ENCODE measurements at regions of chrX and their contacts with region 1.

Region 1: DNA sequence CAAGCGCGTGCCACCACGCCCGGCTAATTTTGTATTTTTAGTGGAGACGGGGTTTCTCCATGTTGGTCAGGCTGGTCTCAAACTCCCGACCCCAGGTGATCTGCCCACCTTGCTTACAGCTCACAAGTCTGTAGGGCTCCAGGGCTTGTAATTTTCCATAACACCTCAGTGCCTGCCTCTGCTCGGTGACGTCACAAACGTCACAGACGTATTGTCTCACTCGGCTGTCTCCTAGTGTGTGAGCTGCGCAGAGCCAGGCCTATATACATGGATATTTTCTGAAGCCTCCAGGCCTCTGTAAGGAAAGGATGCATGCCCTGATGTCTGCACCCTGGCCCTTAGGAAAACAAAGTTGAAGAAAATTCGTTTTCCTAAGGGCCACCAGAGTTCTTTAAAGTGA is 8.6 kb upstream of the NKRF start:
- DNase-seq: no peak
- H3K4me3 Mint-ChIP-seq: no peak overlapping the region
- H3K27ac Mint-ChIP-seq: no peak overlapping the region
- H3K4me1 Mint-ChIP-seq: peaks cover 7% of the 10 kb centered on the region
- H3K27me3 Mint-ChIP-seq: peaks cover 34% of the 10 kb centered on the region
- CTCF ChIP-seq: no peak

Region 2: DNA sequence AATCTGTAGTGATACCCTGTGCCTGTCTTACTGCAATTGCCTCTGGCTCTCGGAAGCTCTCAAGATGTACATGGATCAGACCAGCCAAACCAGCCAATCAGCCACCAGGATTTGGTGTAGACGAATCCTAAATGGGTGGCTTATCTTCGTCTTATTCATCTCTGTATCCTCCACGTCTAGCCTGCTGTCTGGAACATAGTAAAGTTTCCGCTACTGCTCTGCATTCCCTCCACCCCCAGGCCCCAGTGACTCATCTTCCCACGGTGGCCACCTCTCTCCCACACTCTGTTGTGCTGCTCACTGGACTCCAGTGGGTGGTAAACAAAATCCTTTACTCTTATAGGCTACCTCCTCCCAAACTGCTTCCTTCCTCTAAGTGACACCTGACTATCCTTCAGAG is 40.3 kb after region 1 on chrX:
- CTCF ChIA-PET with region 1: no interaction called
- intact Hi-C with region 1: loop called (anchors 5 kb)
- DNase-seq: no peak
- H3K4me3 Mint-ChIP-seq: no peak overlapping the region
- H3K27ac Mint-ChIP-seq: no peak overlapping the region
- H3K4me1 Mint-ChIP-seq: peaks cover 19% of the 10 kb centered on the region
- H3K27me3 Mint-ChIP-seq: no peaks in the 10 kb centered on the region
- CTCF ChIP-seq: no peak